ENCODE measurements at regions of chr21 and their contacts with region 1.

Region 1: DNA sequence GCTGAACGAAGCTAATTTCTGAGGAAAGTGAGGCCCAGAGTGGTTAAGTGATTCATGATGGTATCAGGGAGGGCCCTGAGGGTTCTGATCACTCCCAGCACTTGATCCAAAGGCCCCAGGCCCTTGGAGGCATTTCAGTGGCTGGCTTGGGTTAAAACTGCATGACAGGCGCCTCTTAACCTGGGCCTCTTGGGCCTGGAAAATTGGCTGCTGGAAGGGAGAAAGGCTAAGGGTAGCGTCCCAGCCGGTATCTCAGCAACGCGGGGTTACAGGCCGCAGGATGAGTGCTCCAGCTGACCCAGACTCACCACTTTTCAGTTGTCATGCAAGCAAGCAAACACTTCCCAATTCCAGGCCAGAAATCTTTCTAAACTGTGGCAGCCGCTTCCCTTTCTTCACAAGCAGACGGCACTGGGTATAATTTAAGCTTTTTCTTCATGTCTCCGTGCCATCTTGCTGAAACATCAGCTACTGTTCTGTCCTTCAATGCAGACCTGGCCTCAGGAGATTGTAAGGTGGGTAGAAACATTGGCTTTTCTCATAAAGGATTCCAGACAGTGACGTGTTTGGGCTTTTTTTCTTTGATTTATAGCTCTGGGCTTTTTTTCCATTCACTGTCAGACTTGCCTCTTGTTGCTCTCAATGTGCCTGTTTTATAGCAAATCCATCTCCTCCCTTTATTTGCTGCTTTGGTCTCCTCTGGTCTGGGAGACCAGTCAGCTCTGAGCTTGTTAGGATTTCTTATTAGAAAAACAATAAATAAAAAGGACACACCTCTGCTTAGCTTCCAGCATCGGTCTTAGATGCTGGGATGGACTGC is 229.1 kb downstream of the KCNJ6 start:
- H3K4me3 ChIP-seq: no peak overlapping the region
- H3K27ac ChIP-seq: no peak overlapping the region
- H3K4me1 ChIP-seq: no peaks in the 10 kb centered on the region
- CTCF ChIP-seq: no peak

Region 2: GRCh38 chr21:37380349-37381323 is 306.6 kb before region 1 on chr21:
- CTCF ChIA-PET with region 1: no interaction called
- POLR2A ChIA-PET with region 1: no interaction called
- H3K4me3 ChIP-seq: no peak overlapping the region
- H3K27ac ChIP-seq: no peak overlapping the region
- H3K4me1 ChIP-seq: peaks cover 27% of the 10 kb centered on the region
- CTCF ChIP-seq: no peak

Region 3: DNA sequence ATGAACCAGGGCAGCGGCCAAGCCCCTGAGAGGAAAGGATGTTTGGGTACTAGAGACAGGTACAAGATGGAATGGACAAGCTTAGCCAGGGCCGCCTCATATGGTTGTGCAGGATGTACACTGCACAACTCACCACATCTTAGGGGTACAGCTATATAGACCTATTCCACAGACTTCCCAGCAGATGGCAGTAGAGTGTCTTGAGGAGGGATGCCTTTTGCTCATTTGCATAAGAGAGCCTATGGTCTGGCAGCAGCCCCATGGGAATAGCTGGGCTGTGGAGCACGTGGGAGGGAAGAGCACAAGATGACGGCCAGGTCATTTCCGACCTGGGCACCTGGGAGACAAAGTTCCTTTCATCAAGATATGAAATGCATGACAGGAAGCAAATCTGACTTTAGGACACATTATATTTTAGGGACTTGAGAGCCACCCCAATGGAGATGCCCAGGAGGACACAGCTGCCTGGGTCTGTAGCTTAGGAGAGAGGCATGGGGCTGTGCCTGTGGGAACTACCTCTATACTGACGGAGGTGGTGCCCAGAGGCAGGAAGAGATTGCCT is 13.5 kb after region 1 on chr21:
- CTCF ChIA-PET with region 1: interaction called, 11 read pairs
- POLR2A ChIA-PET with region 1: interaction called, 4 read pairs
- H3K4me3 ChIP-seq: no peak overlapping the region
- H3K27ac ChIP-seq: no peak overlapping the region
- H3K4me1 ChIP-seq: no peaks in the 10 kb centered on the region
- CTCF ChIP-seq: peak; percentile 76

Region 4: DNA sequence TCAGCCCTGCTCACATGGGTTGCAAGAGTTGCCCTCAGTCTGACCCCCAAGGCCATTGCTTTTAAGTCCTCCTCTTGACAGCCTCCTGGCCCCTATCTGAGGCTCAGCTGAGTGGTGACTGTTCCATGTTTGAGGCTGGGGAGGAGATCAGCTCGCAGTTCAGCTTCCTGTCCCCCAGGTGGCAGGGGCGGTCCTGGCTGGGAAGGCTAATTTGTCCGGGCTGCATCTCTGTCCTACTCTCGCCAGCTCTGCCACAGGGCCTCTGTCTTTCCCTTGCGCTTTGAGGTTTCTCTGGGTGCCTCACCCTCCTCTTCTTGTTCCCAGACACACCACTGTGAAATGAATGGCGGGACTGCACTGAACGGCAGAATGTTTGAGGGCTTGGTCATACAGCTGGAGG is 71.8 kb after region 1 on chr21:
- CTCF ChIA-PET with region 1: no interaction called
- POLR2A ChIA-PET with region 1: no interaction called
- H3K4me3 ChIP-seq: no peak overlapping the region
- H3K27ac ChIP-seq: no peak overlapping the region
- H3K4me1 ChIP-seq: no peaks in the 10 kb centered on the region
- CTCF ChIP-seq: peak; percentile 84

Measured in HEK293 (cell line).